ENCODE measurements at regions of chr12 and their contacts with region 1.

Region 1: GRCh38 chr12:108562348-108563135 is at the start of gene ISCU:
- DNase-seq: peak; percentile 97 to 100 (median 99)
- H3K4me3 ChIP-seq: peak within 1 kb of the TSS; percentile 87 to 90
- H3K4me3 Mint-ChIP-seq: peak within 1 kb of the TSS; percentile 100
- H3K27ac ChIP-seq: peak within 1 kb of the TSS; percentile 96
- H3K27ac Mint-ChIP-seq: peak within 1 kb of the TSS; percentile 99 to 100 (median 100)
- H3K4me1 ChIP-seq: peaks cover 65% of the 10 kb centered on the region
- H3K4me1 Mint-ChIP-seq: peaks cover 34 to 79% (median 54%) of the 10 kb centered on the region in 4 donors
- H3K27me3 ChIP-seq: no peaks in the 10 kb centered on the region
- H3K27me3 Mint-ChIP-seq: no peaks in the 10 kb centered on the region
- total RNA-seq, gene ISCU: 182 to 195 TPM

Region 2: GRCh38 chr12:107207931-107208525 is 1354.5 kb before region 1 on chr12:
- CTCF ChIA-PET with region 1: no interaction called
- POLR2A ChIA-PET with region 1: no interaction called
- intact Hi-C with region 1: no loop called
- DNase-seq: no peak
- H3K4me3 ChIP-seq: no peak overlapping the region
- H3K4me3 Mint-ChIP-seq: no peak overlapping the region
- H3K27ac ChIP-seq: no peak overlapping the region
- H3K27ac Mint-ChIP-seq: no peak overlapping the region
- H3K4me1 ChIP-seq: no peaks in the 10 kb centered on the region
- H3K4me1 Mint-ChIP-seq: no peaks in the 10 kb centered on the region
- H3K27me3 ChIP-seq: no peaks in the 10 kb centered on the region
- H3K27me3 Mint-ChIP-seq: peaks cover 8% of the 10 kb centered on the region in 2 donors

Region 3: DNA sequence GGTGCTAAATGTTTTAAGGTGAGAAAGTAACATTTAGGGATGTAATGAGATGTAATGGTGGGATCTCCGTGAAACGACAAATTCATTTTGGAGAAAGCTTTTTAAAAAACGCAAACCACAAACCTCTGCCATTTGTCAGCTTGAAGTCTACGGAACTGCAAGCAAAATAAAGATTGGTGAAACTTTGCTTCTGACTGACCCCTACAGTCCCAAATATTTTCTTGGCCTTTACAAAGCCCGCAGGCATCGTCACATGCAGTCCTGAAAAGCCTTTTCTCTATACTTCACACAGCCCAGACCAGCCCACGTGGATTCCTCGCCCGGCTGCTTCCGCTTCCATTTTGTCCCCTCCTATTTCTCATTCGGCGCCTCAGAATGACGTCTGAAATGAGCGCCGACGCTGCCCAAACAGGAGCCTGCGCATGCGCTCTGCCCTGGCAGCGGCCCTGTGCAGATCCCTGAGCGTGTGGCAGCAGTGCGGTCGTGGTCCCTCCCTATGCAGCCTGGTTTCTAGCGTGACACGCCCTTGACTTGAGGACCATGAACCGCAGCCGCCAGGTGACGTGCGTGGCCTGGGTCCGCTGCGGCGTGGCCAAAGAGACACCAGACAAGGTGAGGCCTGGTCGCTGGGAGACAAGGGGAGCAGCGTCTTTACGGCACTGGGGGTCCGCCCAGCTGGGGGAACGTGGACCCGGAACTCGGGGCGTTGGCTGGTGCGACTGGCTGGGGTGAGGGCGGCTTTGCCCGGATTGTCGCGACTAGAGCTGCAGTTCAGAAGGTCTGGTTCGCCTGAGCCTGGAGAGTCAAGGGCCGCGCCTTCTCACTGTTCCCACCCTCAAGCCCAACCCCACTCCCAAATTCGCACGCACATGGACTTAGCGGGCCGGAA is 876.9 kb before region 1 on chr12 and contains the start of gene PWP1:
- CTCF ChIA-PET with region 1: no interaction called
- POLR2A ChIA-PET with region 1: interaction called, 4 read pairs
- intact Hi-C with region 1: loop called (anchors 1 kb)
- DNase-seq: peak; percentile 94 to 97 (median 95)
- H3K4me3 ChIP-seq: peak within 1 kb of the TSS; percentile 94 to 98
- H3K4me3 Mint-ChIP-seq: peak within 1 kb of the TSS; percentile 96 to 99 (median 97)
- H3K27ac ChIP-seq: peak within 1 kb of the TSS; percentile 78
- H3K27ac Mint-ChIP-seq: peak within 1 kb of the TSS; percentile 94 to 100 (median 98)
- H3K4me1 ChIP-seq: peaks cover 25% of the 10 kb centered on the region
- H3K4me1 Mint-ChIP-seq: peaks cover 14 to 37% (median 26%) of the 10 kb centered on the region in 4 donors
- H3K27me3 ChIP-seq: no peaks in the 10 kb centered on the region
- H3K27me3 Mint-ChIP-seq: no peaks in the 10 kb centered on the region
- total RNA-seq, gene PWP1: 24.3 to 25.6 TPM

Region 4: GRCh38 chr12:108576660-108577234 is 14.2 kb after region 1 on chr12:
- CTCF ChIA-PET with region 1: interaction called, 11 read pairs
- POLR2A ChIA-PET with region 1: interaction called, 14 read pairs
- intact Hi-C with region 1: no loop called
- DNase-seq: no peak
- H3K4me3 ChIP-seq: no peak overlapping the region
- H3K4me3 Mint-ChIP-seq: no peak overlapping the region
- H3K27ac ChIP-seq: no peak overlapping the region
- H3K27ac Mint-ChIP-seq: no peak overlapping the region
- H3K4me1 ChIP-seq: peaks cover 40% of the 10 kb centered on the region
- H3K4me1 Mint-ChIP-seq: peaks cover 27 to 41% (median 32%) of the 10 kb centered on the region in 4 donors
- H3K27me3 ChIP-seq: no peaks in the 10 kb centered on the region
- H3K27me3 Mint-ChIP-seq: no peaks in the 10 kb centered on the region

Region 5: GRCh38 chr12:108643941-108644810 is 81.6 kb after region 1 on chr12:
- CTCF ChIA-PET with region 1: interaction called, 13 read pairs
- POLR2A ChIA-PET with region 1: interaction called, 245 read pairs
- intact Hi-C with region 1: no loop called
- DNase-seq: no peak
- H3K4me3 ChIP-seq: no peak overlapping the region
- H3K4me3 Mint-ChIP-seq: no peak overlapping the region
- H3K27ac ChIP-seq: no peak overlapping the region
- H3K27ac Mint-ChIP-seq: peak overlapping the region in 2 of 7 donors; percentile 32 to 46
- H3K4me1 ChIP-seq: peaks cover 14% of the 10 kb centered on the region
- H3K4me1 Mint-ChIP-seq: peaks cover 18 to 44% (median 25%) of the 10 kb centered on the region in 4 donors
- H3K27me3 ChIP-seq: no peaks in the 10 kb centered on the region
- H3K27me3 Mint-ChIP-seq: no peaks in the 10 kb centered on the region

Region 6: GRCh38 chr12:108731105-108731865 is 168.7 kb after region 1 on chr12 and contains the start of gene CORO1C:
- CTCF ChIA-PET with region 1: no interaction called
- POLR2A ChIA-PET with region 1: no interaction called
- intact Hi-C with region 1: loop called (anchors 1 kb)
- DNase-seq: peak; percentile 94 to 97 (median 95)
- H3K4me3 ChIP-seq: peak within 1 kb of the TSS; percentile 88 to 91
- H3K4me3 Mint-ChIP-seq: peak within 1 kb of the TSS; percentile 89 to 97 (median 95)
- H3K27ac ChIP-seq: peak within 1 kb of the TSS; percentile 69
- H3K27ac Mint-ChIP-seq: peak within 1 kb of the TSS; percentile 92 to 99 (median 98)
- H3K4me1 ChIP-seq: peaks cover 5% of the 10 kb centered on the region
- H3K4me1 Mint-ChIP-seq: peaks cover 11 to 28% (median 26%) of the 10 kb centered on the region in 4 donors
- H3K27me3 ChIP-seq: no peaks in the 10 kb centered on the region
- H3K27me3 Mint-ChIP-seq: no peaks in the 10 kb centered on the region
- total RNA-seq, gene CORO1C: 10.3 to 11.9 TPM

Region 7: GRCh38 chr12:108950991-108951739 is 388.6 kb after region 1 on chr12:
- CTCF ChIA-PET with region 1: interaction called, 3 read pairs
- POLR2A ChIA-PET with region 1: interaction called, 3 read pairs
- intact Hi-C with region 1: loop called (anchors 1 kb)
- DNase-seq: peak; percentile 68 to 76 (median 71)
- H3K4me3 ChIP-seq: no peak overlapping the region
- H3K4me3 Mint-ChIP-seq: peak overlapping the region in 2 of 8 donors; percentile 4 to 34
- H3K27ac ChIP-seq: no peak overlapping the region
- H3K27ac Mint-ChIP-seq: no peak overlapping the region
- H3K4me1 ChIP-seq: peaks cover 7% of the 10 kb centered on the region
- H3K4me1 Mint-ChIP-seq: peaks cover 0 to 5% (median 1%) of the 10 kb centered on the region in 4 donors
- H3K27me3 ChIP-seq: no peaks in the 10 kb centered on the region
- H3K27me3 Mint-ChIP-seq: peaks cover 10 to 13% of the 10 kb centered on the region in 2 donors

Region 8: GRCh38 chr12:109154451-109155438 is 592.2 kb after region 1 on chr12:
- CTCF ChIA-PET with region 1: no interaction called
- POLR2A ChIA-PET with region 1: interaction called, 3 read pairs
- intact Hi-C with region 1: loop called (anchors 10 kb)
- DNase-seq: peak; percentile 74 to 83 (median 77)
- H3K4me3 ChIP-seq: peak overlapping the region; percentile 68 to 75
- H3K4me3 Mint-ChIP-seq: peak overlapping the region; percentile 85 to 96 (median 94)
- H3K27ac ChIP-seq: peak overlapping the region; percentile 42
- H3K27ac Mint-ChIP-seq: peak overlapping the region; percentile 70 to 96 (median 87)
- H3K4me1 ChIP-seq: peaks cover 15% of the 10 kb centered on the region
- H3K4me1 Mint-ChIP-seq: peaks cover 10 to 24% (median 16%) of the 10 kb centered on the region in 4 donors
- H3K27me3 ChIP-seq: no peaks in the 10 kb centered on the region
- H3K27me3 Mint-ChIP-seq: no peaks in the 10 kb centered on the region

Measured in CD4-positive, alpha-beta memory T cell (primary cell).